Ascending aorta (tissue), 2 donors: ENCODE measurements at regions of chr15 and their contacts with region 1.

Region 1: DNA sequence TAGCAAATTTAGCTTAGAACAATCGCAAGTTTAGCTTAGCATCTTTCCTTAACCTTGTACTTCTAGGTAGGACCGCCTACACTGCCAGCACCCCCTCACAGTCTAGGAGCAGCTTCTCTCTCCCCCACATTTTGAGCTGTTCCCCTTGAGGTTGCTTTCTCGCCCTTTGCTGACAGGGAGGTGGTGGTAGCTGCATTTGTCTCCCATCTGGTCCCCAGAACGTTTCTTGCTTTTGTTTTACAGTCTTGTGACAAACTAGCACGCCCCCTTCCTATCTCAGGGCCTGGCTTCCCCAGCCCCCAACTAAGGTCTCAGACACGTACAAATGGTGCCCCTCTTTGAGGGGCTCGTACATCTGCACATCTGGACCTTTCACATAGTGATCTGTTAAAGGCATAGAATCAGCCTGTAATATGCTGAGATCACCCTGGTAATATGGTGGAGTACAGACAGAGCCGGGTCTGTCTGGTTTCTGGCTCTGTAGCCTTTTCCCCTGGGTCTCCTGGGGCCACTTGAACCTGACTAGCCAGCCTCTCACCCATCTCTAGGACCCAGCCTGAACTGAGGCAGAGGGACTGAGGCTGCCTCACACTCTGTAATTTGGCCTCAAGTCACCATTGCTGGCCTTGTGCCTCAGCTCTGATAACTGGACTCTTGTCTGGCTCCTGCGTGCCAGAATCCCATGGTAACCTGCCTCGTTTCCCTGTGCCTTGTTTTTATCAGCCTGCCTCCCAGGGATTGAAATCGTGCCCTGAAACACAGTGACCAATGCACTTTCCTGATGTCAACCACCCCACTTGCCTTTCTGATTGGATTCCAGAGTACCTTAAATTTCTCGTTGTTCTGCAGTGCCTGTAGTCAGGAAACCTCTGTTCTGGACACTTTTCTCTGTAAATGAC is 27.7 kb downstream of the CRTC3 start:
- DNase-seq: peak; percentile 73 to 97
- H3K4me3 ChIP-seq: peak overlapping the region in 1 of 2 donors; percentile 21
- H3K27ac ChIP-seq: peak overlapping the region; percentile 84 to 87
- H3K4me1 ChIP-seq: peaks cover 34 to 67% of the 10 kb centered on the region in 2 donors
- H3K27me3 ChIP-seq: no peaks in the 10 kb centered on the region
- CTCF ChIP-seq: no peak

Region 2: DNA sequence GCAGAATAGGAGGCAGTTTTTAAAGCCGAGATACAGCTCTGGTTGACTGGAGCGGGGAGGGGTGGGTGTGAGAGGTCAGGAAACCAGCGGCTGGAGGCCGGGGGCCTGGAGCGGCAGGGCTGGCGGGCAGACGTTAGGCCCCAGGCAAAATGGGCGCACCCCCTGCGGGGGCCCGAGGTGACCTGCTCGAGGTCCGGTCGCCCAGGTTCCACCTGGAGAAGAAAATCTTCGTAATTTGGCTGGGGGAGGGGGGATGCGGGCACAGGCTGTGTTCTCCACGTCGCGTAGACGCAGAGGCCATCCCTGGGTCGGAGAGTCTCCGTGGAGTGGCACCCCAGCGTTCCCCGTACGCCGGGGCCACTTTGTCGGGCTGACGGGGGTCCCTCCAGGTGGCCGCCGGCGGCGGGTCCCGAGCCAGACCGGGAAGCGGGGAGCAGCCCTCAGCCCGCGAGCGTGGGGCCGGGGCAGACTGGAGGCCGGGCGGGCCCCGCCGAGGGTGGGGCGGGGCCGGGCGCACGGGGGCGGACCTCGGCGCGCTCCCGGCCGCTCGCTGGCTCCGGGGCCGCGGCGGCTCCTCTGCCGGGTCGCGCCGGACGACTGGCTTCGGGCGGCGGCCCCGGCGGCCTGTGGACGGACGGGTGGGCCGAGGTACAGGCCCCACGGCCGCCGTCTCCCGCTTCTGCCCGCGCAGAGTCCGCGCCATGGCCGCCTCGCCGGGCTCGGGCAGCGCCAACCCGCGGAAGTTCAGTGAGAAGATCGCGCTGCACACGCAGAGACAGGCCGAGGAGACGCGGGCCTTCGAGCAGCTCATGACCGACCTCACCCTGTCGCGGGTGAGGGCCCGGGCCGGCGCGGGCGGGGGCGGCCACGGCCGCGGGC is 27.8 kb before region 1 on chr15 and contains the start of gene CRTC3:
- intact Hi-C with region 1: loop called (anchors 1 kb)
- DNase-seq: peak in 1 of 2 donors; percentile 75
- H3K4me3 ChIP-seq: peak within 1 kb of the TSS; percentile 86 to 90
- H3K27ac ChIP-seq: peak within 1 kb of the TSS; percentile 88 to 95
- H3K4me1 ChIP-seq: peaks cover 6 to 20% of the 10 kb centered on the region in 2 donors
- H3K27me3 ChIP-seq: no peaks in the 10 kb centered on the region
- CTCF ChIP-seq: no peak
- total RNA-seq, gene CRTC3: 35.5 TPM

Region 3: DNA sequence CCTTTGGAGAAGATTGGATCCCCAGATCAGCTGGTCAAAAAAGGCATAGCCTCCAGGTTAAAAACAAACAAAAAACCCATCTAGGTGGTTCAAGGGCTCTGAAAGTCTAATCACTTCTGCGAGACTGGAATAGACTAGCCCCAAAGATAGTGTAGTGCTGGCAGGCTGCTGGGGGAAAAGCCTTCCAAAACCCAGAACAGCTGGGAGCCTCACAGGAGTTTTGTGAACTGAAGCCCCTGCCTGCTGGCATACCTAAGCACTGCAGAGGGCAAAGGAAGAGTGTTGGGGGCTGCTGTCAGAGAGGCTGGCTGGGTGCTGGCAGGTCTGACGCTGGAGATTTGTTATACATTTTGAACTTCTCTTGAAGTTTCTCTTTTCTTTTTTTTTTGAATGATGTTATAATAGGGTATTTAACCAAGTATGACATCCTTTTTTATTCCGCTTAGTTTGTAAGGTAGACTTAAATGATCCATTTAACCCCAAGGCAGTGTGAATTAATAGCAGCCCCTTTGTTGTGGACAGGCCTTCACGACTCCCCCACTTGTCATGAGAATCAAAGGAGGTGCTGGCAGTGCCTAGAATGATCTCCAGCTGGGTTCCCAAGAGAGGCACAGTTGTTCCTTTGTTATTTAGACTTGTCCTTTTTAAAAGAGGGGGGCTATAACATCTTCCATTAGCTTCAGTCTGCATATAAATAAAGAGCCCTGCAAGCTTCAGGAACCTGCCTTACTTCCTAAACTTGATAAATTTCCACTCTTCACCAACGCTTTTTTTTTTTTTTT is 26.2 kb after region 1 on chr15:
- intact Hi-C with region 1: loop called (anchors 2 kb)
- DNase-seq: no peak
- H3K4me3 ChIP-seq: no peak overlapping the region
- H3K27ac ChIP-seq: peak overlapping the region; percentile 38 to 56
- H3K4me1 ChIP-seq: peaks cover 3 to 31% of the 10 kb centered on the region in 2 donors
- H3K27me3 ChIP-seq: no peaks in the 10 kb centered on the region
- CTCF ChIP-seq: no peak

Region 4: GRCh38 chr15:90594301-90594701 is 36.9 kb after region 1 on chr15:
- intact Hi-C with region 1: loop called (anchors 1 kb)
- DNase-seq: peak; percentile 83 to 97
- H3K4me3 ChIP-seq: peak overlapping the region in 1 of 2 donors; percentile 37
- H3K27ac ChIP-seq: peak overlapping the region; percentile 76 to 82
- H3K4me1 ChIP-seq: peaks cover 16 to 71% of the 10 kb centered on the region in 2 donors
- H3K27me3 ChIP-seq: no peaks in the 10 kb centered on the region
- CTCF ChIP-seq: no peak

Region 5: DNA sequence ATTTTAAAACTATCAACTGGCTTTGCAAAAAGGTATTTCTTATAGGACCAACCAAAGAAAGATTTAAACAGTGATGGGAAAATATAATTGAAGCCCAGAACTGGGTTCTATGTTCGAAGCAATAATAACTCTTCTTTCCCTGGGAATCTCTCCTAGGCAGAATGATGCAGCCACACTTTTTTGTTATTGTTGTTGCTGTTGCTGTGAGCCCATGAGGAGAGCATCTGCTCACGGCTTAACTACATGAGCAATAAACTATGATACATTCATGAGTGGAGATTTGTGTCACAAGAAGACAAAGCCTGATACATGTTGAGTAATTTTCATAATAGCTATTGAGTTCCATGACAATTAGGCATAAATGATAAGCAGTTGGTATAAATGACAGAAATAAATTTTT is 52.8 kb after region 1 on chr15:
- intact Hi-C with region 1: loop called (anchors 5 kb)
- DNase-seq: no peak
- H3K4me3 ChIP-seq: peak overlapping the region in 1 of 2 donors; percentile 20
- H3K27ac ChIP-seq: peak overlapping the region; percentile 74 to 80
- H3K4me1 ChIP-seq: peaks cover 9 to 31% of the 10 kb centered on the region in 2 donors
- H3K27me3 ChIP-seq: no peaks in the 10 kb centered on the region
- CTCF ChIP-seq: no peak

Region 6: GRCh38 chr15:90742087-90742486 is 184.7 kb after region 1 on chr15:
- intact Hi-C with region 1: no loop called
- DNase-seq: no peak
- H3K4me3 ChIP-seq: no peak overlapping the region
- H3K27ac ChIP-seq: no peak overlapping the region
- H3K4me1 ChIP-seq: no peaks in the 10 kb centered on the region
- H3K27me3 ChIP-seq: no peaks in the 10 kb centered on the region
- CTCF ChIP-seq: no peak